Naive thymus-derived CD4-positive, alpha-beta T cell (primary cell): ENCODE measurements at regions of chr19 and their contacts with region 1.

Region 1: DNA sequence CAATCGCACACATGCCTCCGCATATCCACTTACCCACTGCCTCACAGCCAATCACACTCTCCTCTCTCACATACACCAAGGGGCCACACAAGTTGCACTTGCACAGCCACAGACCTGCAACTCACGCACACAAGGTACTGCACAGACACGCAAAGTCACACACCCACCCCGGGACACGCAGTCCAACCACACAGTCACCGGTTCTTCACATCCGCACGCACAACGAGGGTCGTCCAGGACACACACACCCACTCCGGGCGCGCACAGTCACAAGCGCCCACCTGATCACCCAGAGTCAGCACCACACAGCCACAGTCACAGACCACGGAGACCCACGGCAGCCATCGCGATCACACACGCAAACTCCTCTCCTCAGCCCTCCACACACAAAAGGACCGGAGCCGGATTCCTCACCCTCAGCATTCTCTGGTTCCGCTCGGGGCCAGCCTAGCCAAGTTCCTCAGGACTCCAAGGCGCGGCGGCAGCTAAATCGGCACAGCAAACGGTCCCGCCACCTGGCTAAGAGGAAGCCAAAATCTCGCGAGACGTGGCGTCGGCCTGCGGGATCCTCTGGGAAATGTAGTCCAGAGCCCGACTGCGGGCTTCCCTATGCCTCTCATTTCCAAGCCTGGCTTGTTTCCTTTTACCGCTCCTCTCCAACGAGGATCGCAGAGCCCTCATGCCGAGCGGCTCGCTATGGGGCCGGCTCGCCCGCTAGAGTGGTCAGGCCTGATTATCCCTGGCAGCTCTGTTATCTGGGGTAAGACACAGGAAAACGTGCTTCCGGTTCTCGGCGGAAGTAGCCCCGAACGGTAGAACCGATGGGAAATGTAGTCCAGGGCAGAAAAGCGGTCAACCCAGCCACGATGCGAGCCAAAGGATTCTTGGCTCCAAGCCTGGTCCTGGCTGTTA is at the start of gene ZNF850:
- DNase-seq: peak; percentile 88 to 97 (median 94)
- ATAC-seq: peak; percentile 94
- H3K4me3 ChIP-seq: peak within 1 kb of the TSS; percentile 97
- H3K4me3 Mint-ChIP-seq: peak within 1 kb of the TSS; percentile 88 to 98 (median 96)
- H3K27ac ChIP-seq: peak within 1 kb of the TSS; percentile 87
- H3K27ac Mint-ChIP-seq: peak within 1 kb of the TSS; percentile 82 to 98 (median 92)
- H3K4me1 ChIP-seq: peaks cover 12 to 15% of the 10 kb centered on the region in 2 donors
- H3K4me1 Mint-ChIP-seq: peaks cover 21 to 26% (median 24%) of the 10 kb centered on the region in 7 donors
- H3K27me3 ChIP-seq: no peaks in the 10 kb centered on the region
- H3K27me3 Mint-ChIP-seq: no peaks in the 10 kb centered on the region
- total RNA-seq, gene ZNF850: 1.9 to 4.8 (median 4.3) TPM

Region 2: GRCh38 chr19:36139473-36140303 is 632.9 kb before region 1 on chr19 and contains the start of gene CAPNS1:
- CTCF ChIA-PET with region 1: no interaction called
- POLR2A ChIA-PET with region 1: no interaction called
- intact Hi-C with region 1: loop called (anchors 2 to 5 kb)
- DNase-seq: peak; percentile 82 to 95 (median 86)
- ATAC-seq: peak; percentile 83
- H3K4me3 ChIP-seq: peak within 1 kb of the TSS; percentile 99
- H3K4me3 Mint-ChIP-seq: peak within 1 kb of the TSS; percentile 91 to 98 (median 95)
- H3K27ac ChIP-seq: peak within 1 kb of the TSS; percentile 87
- H3K27ac Mint-ChIP-seq: peak within 1 kb of the TSS; percentile 85 to 97 (median 91)
- H3K4me1 ChIP-seq: peaks cover 6 to 9% of the 10 kb centered on the region in 2 donors
- H3K4me1 Mint-ChIP-seq: peaks cover 10 to 25% (median 15%) of the 10 kb centered on the region in 7 donors
- H3K27me3 ChIP-seq: no peaks in the 10 kb centered on the region
- H3K27me3 Mint-ChIP-seq: no peaks in the 10 kb centered on the region
- total RNA-seq, gene CAPNS1: 197 to 473 (median 207) TPM

Region 3: DNA sequence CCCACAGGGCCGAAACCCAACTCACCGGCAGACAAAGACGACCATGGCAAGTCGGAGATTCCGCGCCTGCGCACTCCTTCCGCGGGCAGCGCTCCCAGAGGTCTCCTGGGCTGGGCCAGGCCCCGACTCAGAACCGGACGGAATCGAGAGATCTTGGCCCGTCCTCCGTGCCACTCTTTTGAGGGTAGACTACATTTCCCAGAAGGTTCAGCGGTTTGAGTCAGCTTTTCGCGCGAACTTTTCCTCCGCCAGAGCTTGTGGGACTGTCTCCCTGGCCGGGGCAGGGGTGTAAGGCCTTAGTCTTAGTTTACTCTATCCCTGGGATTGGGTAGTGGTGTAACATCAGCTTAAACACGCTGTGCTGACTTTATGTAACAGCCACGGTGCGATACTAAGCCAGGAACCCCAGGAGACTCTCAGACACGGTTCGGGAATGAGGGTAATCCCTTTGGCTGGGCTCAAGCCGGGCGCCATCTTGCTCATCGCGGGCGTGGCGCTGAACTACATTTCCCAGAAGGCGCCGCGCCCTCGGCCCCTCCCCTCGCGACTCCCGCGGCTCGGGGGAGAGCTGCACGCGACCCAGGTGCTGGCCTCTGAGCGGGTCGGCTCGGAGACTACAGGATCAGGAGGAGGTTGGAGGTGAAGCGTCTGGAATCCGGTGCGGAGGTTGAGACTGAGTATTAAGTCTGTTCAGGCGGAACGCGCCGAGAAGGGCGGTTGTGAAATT is 244.2 kb before region 1 on chr19 and contains the start of gene ZNF260:
- CTCF ChIA-PET with region 1: no interaction called
- POLR2A ChIA-PET with region 1: interaction called, 5 read pairs
- intact Hi-C with region 1: loop called (anchors 1 kb)
- DNase-seq: peak; percentile 81 to 94 (median 90)
- ATAC-seq: peak; percentile 95
- H3K4me3 ChIP-seq: peak within 1 kb of the TSS; percentile 91
- H3K4me3 Mint-ChIP-seq: peak within 1 kb of the TSS; percentile 88 to 100 (median 98)
- H3K27ac ChIP-seq: peak within 1 kb of the TSS; percentile 83
- H3K27ac Mint-ChIP-seq: peak within 1 kb of the TSS; percentile 84 to 99 (median 96)
- H3K4me1 ChIP-seq: peaks cover 4 to 11% of the 10 kb centered on the region in 2 donors
- H3K4me1 Mint-ChIP-seq: peaks cover 15 to 31% (median 23%) of the 10 kb centered on the region in 7 donors
- H3K27me3 ChIP-seq: no peaks in the 10 kb centered on the region
- H3K27me3 Mint-ChIP-seq: no peaks in the 10 kb centered on the region
- total RNA-seq, gene ZNF260: 2.9 to 13.2 (median 11.3) TPM

Region 4: DNA sequence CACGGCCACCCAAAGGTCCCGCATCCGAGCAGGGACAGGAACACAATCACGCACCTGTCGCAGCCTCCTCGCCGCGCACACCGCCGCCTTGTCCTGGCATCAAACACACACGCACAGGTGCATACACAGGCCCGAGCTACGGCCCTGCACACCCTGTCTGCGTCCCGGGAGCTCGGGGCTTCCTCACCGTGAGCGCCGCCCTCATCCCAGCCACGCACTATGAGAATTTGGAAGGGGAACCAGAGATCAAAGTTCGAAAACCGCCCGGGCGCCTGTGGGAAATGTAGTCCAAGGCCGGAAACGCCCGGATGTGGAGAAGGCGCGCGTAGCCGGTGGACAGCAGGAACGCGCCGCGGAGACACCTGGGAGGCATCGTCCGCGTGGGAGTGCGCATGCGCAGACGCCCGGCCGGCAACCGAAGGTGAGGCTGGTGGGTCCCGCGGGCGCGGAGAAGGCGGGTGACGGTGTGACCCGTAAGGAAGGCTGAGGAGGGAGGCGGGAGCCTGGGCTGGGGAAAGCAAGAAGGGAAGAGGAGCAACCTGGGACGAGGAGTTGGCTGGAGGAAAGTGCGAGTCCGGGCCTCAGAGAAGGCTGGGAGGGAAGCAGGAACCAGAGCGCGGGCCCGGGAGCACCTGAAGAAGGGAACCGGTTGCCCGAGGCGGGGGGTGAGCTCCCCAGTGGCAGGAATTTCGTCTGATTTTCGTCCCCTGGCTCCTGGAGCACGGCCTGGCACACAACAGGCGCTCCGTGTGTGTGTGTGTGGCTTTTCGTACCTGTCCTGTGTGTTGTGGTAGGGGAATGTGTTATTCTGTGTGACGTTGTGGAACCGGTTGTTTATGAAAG is 85.1 kb before region 1 on chr19 and contains the start of gene ZNF567:
- CTCF ChIA-PET with region 1: no interaction called
- POLR2A ChIA-PET with region 1: interaction called, 3 read pairs
- intact Hi-C with region 1: loop called (anchors 1 kb)
- DNase-seq: peak; percentile 90 to 99 (median 93)
- ATAC-seq: peak; percentile 97
- H3K4me3 ChIP-seq: peak within 1 kb of the TSS; percentile 85
- H3K4me3 Mint-ChIP-seq: peak within 1 kb of the TSS; percentile 94 to 100 (median 98)
- H3K27ac ChIP-seq: peak within 1 kb of the TSS; percentile 86
- H3K27ac Mint-ChIP-seq: peak within 1 kb of the TSS; percentile 92 to 97 (median 95)
- H3K4me1 ChIP-seq: peaks cover 13 to 22% of the 10 kb centered on the region in 2 donors
- H3K4me1 Mint-ChIP-seq: peaks cover 26 to 49% (median 40%) of the 10 kb centered on the region in 7 donors
- H3K27me3 ChIP-seq: no peaks in the 10 kb centered on the region
- H3K27me3 Mint-ChIP-seq: peaks cover 0 to 5% (median 0%) of the 10 kb centered on the region in 5 donors
- total RNA-seq, gene ZNF567: 7.0 to 18.3 (median 9.3) TPM

Region 5: DNA sequence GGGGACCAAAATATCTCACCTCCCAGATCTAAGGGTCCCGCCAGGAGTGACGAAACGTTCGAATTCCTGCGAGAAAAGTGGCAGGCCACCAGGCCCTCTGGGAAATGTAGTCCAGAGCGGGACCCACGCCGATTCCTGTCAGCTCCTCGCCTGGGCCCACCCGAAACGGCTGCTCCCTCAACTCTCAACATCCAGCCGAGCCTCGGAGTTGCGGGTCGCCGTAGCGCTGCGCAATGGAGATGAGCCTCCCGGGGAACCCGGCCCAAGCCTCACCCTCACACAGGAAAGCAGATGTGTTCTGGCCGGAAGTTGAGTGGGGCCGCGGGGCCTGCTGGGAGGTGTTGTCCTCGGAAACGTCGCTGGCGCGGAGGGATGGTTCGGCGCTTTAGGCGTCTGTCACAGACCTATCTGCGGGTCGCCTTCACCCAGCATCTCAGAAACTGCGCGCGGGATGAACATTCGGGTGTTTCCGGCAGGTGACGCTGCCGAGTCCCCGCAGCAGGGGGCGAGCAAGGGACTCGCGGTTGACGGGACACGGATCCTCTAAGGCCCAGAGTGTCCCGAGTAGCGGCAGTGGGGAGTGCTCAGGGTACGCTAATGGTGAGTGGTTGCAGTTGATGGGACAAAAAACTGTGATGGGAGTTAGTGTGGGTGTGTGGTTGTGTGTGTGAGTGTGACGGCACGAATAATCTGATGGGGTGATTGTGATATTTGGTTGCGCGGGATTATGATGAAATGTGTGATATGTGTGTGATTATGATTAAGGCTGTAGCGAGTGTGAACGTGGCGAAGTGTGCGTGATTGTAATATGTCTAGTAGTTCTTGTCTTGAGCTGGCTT is 143.6 kb after region 1 on chr19 and contains the starts of genes ZNF568 and ZNF829:
- CTCF ChIA-PET with region 1: no interaction called
- POLR2A ChIA-PET with region 1: no interaction called
- intact Hi-C with region 1: loop called (anchors 1 kb)
- DNase-seq: peak; percentile 78 to 96 (median 93)
- ATAC-seq: peak; percentile 97
- H3K4me3 ChIP-seq: peak within 1 kb of the TSS; percentile 95
- H3K4me3 Mint-ChIP-seq: peak within 1 kb of the TSS; percentile 87 to 99 (median 95)
- H3K27ac ChIP-seq: peak within 1 kb of the TSS; percentile 94
- H3K27ac Mint-ChIP-seq: peak within 1 kb of the TSS; percentile 90 to 97 (median 94)
- H3K4me1 ChIP-seq: peaks cover 8 to 13% of the 10 kb centered on the region in 2 donors
- H3K4me1 Mint-ChIP-seq: peaks cover 19 to 46% (median 29%) of the 10 kb centered on the region in 7 donors
- H3K27me3 ChIP-seq: no peaks in the 10 kb centered on the region
- H3K27me3 Mint-ChIP-seq: no peaks in the 10 kb centered on the region
- total RNA-seq, gene ZNF568: 8.2 to 18.0 (median 9.3) TPM
- total RNA-seq, gene ZNF829: 2.6 to 9.0 (median 6.3) TPM

Region 6: GRCh38 chr19:37127999-37128820 is 355.6 kb after region 1 on chr19:
- CTCF ChIA-PET with region 1: no interaction called
- POLR2A ChIA-PET with region 1: no interaction called
- intact Hi-C with region 1: no loop called
- DNase-seq: no peak
- ATAC-seq: no peak
- H3K4me3 ChIP-seq: peak overlapping the region; percentile 39
- H3K4me3 Mint-ChIP-seq: no peak overlapping the region
- H3K27ac ChIP-seq: no peak overlapping the region
- H3K27ac Mint-ChIP-seq: no peak overlapping the region
- H3K4me1 ChIP-seq: no peaks in the 10 kb centered on the region
- H3K4me1 Mint-ChIP-seq: no peaks in the 10 kb centered on the region
- H3K27me3 ChIP-seq: no peaks in the 10 kb centered on the region
- H3K27me3 Mint-ChIP-seq: no peaks in the 10 kb centered on the region

Region 7: GRCh38 chr19:37217855-37218591 is 445.5 kb after region 1 on chr19 and contains the start of gene ZNF383:
- CTCF ChIA-PET with region 1: no interaction called
- POLR2A ChIA-PET with region 1: interaction called, 5 read pairs
- intact Hi-C with region 1: loop called in 1 of 2 experiments (anchors 1 kb)
- DNase-seq: peak; percentile 63 to 81 (median 78)
- ATAC-seq: peak; percentile 95
- H3K4me3 ChIP-seq: peak within 1 kb of the TSS; percentile 93
- H3K4me3 Mint-ChIP-seq: peak within 1 kb of the TSS; percentile 90 to 97 (median 92)
- H3K27ac ChIP-seq: peak within 1 kb of the TSS; percentile 94
- H3K27ac Mint-ChIP-seq: peak within 1 kb of the TSS; percentile 74 to 99 (median 91)
- H3K4me1 ChIP-seq: peaks cover 0 to 6% of the 10 kb centered on the region in 2 donors
- H3K4me1 Mint-ChIP-seq: peaks cover 21 to 33% (median 31%) of the 10 kb centered on the region in 7 donors
- H3K27me3 ChIP-seq: no peaks in the 10 kb centered on the region
- H3K27me3 Mint-ChIP-seq: no peaks in the 10 kb centered on the region
- total RNA-seq, gene ZNF383: 12.2 to 33.4 (median 21.2) TPM

Region 8: DNA sequence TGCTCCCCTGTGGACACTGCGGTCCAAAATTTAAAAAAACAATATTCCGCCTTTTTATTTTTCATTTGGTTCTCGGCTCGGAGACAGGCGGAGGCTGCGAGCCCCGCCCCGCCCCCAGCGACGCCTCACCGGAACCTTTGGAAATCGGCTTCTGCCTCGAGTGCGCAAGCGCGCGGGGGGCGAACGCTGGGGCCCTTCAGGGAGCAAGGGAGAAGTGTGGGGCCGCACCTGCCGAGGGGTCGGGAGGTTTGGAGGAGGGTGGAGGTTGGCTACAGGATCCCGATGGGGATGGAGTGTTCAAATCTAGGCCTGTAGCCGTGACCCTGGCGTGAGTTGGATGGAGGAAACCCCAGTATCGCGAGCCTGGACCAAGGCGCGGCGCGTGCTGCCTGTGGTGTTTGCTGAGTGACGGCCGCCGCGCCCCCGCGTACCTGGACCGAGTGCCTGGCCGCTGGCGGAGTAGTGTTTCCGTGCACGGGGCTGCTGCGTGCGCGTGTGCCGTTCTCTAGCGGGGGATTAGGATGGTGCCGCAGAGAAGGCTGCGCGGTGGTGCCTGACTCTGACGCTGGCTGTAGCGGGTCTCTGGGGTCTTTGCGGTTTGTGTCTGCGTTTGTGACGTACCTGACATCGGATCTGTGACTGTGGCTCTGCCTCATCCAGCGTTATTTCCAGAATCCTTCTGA is 883.3 kb after region 1 on chr19:
- CTCF ChIA-PET with region 1: no interaction called
- POLR2A ChIA-PET with region 1: no interaction called
- intact Hi-C with region 1: loop called in 1 of 2 experiments (anchors 10 kb)
- DNase-seq: peak; percentile 74 to 90 (median 86)
- ATAC-seq: peak; percentile 86
- H3K4me3 ChIP-seq: peak overlapping the region; percentile 95
- H3K4me3 Mint-ChIP-seq: peak overlapping the region; percentile 82 to 99 (median 96)
- H3K27ac ChIP-seq: peak overlapping the region; percentile 89
- H3K27ac Mint-ChIP-seq: peak overlapping the region; percentile 81 to 99 (median 97)
- H3K4me1 ChIP-seq: peaks cover 8 to 16% of the 10 kb centered on the region in 2 donors
- H3K4me1 Mint-ChIP-seq: peaks cover 28 to 40% (median 33%) of the 10 kb centered on the region in 7 donors
- H3K27me3 ChIP-seq: no peaks in the 10 kb centered on the region
- H3K27me3 Mint-ChIP-seq: peaks cover 0 to 3% (median 0%) of the 10 kb centered on the region in 5 donors